Aorta (tissue), 5 donors: ENCODE measurements at regions of chr12 and their contacts with region 1.

Region 1: DNA sequence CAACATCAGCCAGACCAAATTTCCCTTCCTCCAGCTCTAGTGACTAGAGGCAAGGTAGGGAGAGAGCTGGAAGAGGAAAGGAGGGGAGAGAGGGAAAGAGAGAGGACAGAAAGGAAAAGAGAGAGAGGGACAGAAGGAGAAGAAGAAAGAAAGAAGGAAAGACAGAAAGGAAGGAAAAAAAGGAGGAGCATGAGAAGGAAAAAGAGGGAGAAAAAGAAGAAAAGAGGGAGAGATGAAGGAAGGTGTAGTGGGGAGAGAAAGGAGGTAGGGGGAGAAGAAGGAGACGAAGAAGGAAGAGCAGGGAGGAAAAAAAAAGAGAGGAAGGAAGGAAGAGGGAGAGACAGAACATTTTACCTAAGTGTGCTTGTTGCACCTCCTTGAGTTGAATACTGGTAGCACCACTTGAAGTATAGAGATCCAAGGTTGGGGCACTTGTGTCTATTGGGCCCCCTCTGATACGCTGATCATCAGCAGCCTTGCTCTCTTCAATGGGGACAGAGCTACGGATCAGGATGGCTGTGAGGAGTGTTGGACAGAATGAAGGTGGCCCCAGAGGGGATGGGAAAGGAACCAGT is 232.5 kb downstream of the SUDS3 start:
- DNase-seq: no peak
- ATAC-seq: no peak
- H3K4me3 ChIP-seq: no peak overlapping the region
- H3K27ac ChIP-seq: no peak overlapping the region
- H3K4me1 ChIP-seq: peaks cover 0 to 3% of the 10 kb centered on the region in 2 donors
- H3K27me3 ChIP-seq: no peaks in the 10 kb centered on the region

Region 2: DNA sequence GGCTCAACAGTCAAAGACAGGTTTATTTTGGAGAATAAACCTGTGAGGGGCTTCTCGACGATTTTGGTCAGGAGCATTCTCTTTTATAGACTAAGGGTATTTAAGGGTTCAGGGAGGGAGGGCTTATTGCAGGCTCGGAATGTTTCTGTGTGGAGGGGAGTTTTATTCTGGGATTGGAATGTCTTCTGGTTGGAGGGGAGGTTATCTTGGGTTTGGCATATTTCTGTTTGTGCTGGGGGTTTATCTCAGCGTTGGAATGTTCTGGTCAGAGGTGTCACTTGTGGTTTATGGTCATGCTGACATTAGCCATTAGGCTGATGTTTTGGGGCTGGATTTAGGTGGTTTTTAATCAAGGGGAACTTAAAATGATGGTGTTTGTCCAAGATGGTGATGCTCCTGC is 128.6 kb before region 1 on chr12:
- intact Hi-C with region 1: no loop called
- DNase-seq: no peak
- ATAC-seq: no peak
- H3K4me3 ChIP-seq: no peak overlapping the region
- H3K27ac ChIP-seq: no peak overlapping the region
- H3K4me1 ChIP-seq: no peaks in the 10 kb centered on the region
- H3K27me3 ChIP-seq: no peaks in the 10 kb centered on the region

Region 3: DNA sequence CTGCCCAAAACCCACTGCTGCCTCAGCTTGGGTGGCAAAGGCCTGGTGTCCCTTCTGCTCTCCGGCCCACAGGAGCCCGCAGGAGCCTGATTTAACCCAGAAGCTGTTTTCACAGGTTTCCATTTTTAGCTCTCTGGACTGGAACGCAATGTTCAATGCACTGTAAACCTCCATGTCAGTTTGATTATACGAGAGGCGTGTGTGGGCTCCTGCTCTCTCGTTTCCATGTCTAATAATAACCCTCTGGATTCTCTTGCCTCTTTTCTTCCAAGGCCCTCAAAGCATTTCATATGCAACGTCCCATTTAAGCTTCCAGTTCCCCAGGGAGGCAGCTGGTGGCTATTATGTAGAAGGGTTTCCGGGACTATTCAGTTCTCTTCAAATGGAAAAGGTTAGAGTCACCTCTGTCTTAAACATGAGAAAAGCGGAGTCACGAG is 71.4 kb before region 1 on chr12:
- intact Hi-C with region 1: loop called in 1 of 2 experiments (anchors 5 kb)
- DNase-seq: peak in 1 of 2 donors; percentile 71
- ATAC-seq: peak; percentile 35
- H3K4me3 ChIP-seq: no peak overlapping the region
- H3K27ac ChIP-seq: peak overlapping the region in 1 of 2 donors; percentile 96
- H3K4me1 ChIP-seq: no peaks in the 10 kb centered on the region
- H3K27me3 ChIP-seq: no peaks in the 10 kb centered on the region

Region 4: DNA sequence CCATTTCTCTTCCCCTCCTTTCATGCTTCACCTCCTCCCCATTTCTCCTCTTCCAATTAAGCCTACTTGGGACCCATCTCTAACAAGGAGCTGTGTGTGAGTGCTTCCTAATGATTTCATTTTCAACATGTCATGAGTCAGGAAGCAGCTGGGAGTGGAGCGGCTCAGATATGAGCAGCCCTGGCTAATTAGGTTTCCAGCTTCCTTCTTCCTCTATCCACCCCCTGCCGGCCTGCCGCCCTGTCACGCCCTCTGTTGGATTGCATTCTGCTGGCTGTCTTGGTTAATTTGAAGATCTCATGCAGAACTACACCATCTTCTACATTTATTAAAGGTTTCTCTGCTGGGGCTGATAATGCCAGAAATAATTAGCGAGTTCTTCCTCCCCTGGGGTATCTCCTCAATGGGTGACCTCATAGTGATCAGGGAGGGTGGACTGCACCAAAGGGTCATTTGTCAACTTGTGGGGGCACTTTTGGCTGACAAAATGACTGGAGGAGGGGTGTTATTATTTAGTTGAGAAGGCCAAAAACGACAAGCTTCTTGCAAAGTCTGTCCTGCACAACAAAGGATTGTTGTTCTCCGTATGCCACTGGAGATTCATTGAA is 71.6 kb after region 1 on chr12:
- intact Hi-C with region 1: no loop called
- DNase-seq: no peak
- ATAC-seq: no peak
- H3K4me3 ChIP-seq: no peak overlapping the region
- H3K27ac ChIP-seq: no peak overlapping the region
- H3K4me1 ChIP-seq: no peaks in the 10 kb centered on the region
- H3K27me3 ChIP-seq: peaks cover 0 to 1% of the 10 kb centered on the region in 2 donors